Right ventricle myocardium inferior (tissue), 1 donor: ENCODE measurements at regions of chr3 and their contacts with region 1.

Region 1: DNA sequence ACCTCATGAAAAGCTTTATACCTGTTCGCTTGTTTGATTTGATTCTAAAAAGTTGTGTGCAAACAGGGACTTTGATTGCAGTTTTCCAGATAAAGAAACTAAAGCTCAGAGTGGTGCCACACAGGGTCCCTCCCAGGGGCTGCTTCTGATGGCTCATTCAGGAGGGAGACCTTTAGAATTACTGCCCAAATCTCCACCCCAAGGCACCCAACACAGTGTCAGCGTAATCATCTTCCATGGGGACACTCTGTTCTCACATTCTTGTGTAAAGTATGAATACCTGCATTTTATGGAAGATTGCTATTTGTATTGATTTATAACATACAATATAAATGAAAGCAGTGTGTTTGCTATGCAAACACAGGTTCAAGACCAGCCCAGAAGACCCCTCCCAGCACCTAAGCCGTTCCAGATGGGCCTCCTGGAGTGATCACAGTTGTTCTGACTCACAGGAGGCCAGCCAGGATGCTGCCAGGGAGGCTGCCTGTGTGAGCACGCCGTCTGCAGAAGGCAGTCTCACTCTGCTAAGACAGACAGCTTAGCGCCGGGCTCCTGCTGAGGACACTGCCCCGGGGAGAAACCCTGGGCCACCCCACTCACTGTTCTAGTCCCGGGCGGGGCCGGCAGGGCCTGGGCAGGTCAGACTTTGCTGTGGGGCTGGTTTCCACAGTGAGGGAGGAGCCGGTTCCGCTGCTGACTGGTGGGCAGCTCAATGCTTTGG is 185.6 kb downstream of the FAM43A start:
- DNase-seq: peak; percentile 81
- ATAC-seq: peak; percentile 72

Region 2: DNA sequence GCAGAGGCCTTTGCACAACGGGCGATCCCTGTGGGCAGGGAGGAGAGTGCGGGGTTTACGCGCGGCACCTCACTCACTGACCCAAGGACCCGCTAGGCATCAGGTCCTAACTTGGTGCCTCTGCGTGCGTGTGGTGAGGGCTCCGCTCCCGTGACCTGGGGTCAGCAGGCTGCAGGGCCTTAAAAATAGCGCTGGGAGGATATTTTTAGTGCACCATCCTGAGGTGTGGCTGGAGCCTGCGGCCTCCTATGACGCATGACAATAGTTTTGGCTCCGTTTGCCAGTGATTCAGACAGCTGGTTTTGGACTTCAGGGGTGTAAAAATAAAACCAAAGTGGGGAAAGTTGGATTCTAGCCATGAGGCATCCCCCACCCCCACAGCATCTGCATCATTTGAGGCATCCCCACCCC is 46.6 kb before region 1 on chr3:
- intact Hi-C with region 1: loop called (anchors 5 kb)
- DNase-seq: no peak
- ATAC-seq: peak; percentile 92

Region 3: GRCh38 chr3:194930377-194931204 is 59.3 kb after region 1 on chr3:
- intact Hi-C with region 1: loop called (anchors 5 kb)
- DNase-seq: no peak
- ATAC-seq: peak; percentile 78